Activated CD4-positive, alpha-beta memory T cell treated with anti-CD3 and anti-CD28 coated beads for 36 hours (primary cell): ENCODE measurements at regions of chr6 and their contacts with region 1.

Region 1: DNA sequence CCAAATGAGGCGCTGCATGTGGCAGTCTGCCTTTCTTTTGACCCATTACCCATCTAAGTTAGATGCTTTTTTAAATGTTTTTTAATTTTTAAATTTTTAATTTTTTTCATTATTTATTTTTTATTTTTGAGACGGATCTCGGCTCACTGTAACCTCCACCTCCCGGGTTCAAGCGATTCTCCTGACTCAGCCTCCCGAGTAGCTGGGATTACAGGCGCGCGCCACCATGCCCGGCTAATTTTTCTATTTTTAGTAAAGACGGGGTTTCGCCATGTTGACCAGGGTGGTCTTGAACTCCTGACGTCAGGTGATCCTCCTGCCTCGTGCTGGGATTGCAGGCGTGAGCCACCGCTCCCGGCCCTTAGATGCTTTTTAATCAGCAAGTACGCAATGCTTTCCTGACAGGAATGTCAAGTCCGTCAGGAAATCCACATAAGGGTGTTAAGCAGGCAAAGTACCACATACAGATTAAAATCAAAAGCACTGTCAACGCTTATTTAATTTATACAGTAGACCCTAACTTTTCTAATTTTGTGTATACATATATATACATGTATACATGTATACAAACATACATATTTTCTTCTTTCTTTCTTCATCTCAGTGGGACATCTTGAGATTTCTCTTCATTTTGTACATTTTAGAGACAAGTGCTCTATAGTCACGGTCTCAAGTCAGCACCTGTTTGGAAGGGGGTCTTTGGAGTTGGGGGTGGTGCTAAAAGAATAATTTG is 995 bp upstream of the GSTA4 start:
- DNase-seq: peak; percentile 49
- H3K4me3 Mint-ChIP-seq: peak overlapping the region; percentile 95
- H3K27ac Mint-ChIP-seq: peak overlapping the region; percentile 99
- H3K4me1 Mint-ChIP-seq: peaks cover 31% of the 10 kb centered on the region
- H3K27me3 Mint-ChIP-seq: peaks cover 5% of the 10 kb centered on the region

Region 2: GRCh38 chr6:52399511-52400312 is 596.4 kb before region 1 on chr6:
- CTCF ChIA-PET with region 1: no interaction called
- POLR2A ChIA-PET with region 1: no interaction called
- intact Hi-C with region 1: loop called (anchors 10 kb)
- DNase-seq: peak; percentile 39
- H3K4me3 Mint-ChIP-seq: no peak overlapping the region
- H3K27ac Mint-ChIP-seq: peak overlapping the region; percentile 40
- H3K4me1 Mint-ChIP-seq: peaks cover 63% of the 10 kb centered on the region
- H3K27me3 Mint-ChIP-seq: no peaks in the 10 kb centered on the region

Region 3: GRCh38 chr6:52808660-52809059 is 187.4 kb before region 1 on chr6:
- CTCF ChIA-PET with region 1: no interaction called
- POLR2A ChIA-PET with region 1: no interaction called
- intact Hi-C with region 1: no loop called
- DNase-seq: no peak
- H3K4me3 Mint-ChIP-seq: no peak overlapping the region
- H3K27ac Mint-ChIP-seq: no peak overlapping the region
- H3K4me1 Mint-ChIP-seq: no peaks in the 10 kb centered on the region
- H3K27me3 Mint-ChIP-seq: peaks cover 7% of the 10 kb centered on the region

Region 4: GRCh38 chr6:52881996-52882841 is 113.9 kb before region 1 on chr6:
- CTCF ChIA-PET with region 1: interaction called, 4 read pairs
- POLR2A ChIA-PET with region 1: no interaction called
- intact Hi-C with region 1: loop called (anchors 1 kb)
- DNase-seq: peak; percentile 79
- H3K4me3 Mint-ChIP-seq: peak overlapping the region; percentile 75
- H3K27ac Mint-ChIP-seq: no peak overlapping the region
- H3K4me1 Mint-ChIP-seq: peaks cover 6% of the 10 kb centered on the region
- H3K27me3 Mint-ChIP-seq: peaks cover 2% of the 10 kb centered on the region

Region 5: DNA sequence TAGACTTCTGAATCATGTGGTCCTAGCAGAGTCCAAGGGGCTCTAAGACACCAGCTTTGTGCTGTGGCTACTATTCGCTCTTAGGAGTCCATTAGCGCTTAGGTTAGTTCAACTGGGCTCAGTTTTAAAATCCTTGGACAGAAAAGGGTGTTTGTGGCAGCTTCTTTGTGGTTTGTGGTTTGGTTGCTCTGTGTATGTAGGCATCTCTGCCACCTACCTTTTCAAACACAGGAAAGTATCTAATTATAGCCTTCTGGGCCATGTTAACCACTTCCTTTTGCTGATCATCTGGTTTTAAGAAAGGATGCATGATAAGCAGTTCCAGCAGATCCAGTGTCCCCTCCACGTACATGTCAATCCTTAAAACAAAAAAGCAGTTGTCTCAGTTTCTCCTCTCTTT is 11.8 kb before region 1 on chr6:
- CTCF ChIA-PET with region 1: interaction called, 49 read pairs
- POLR2A ChIA-PET with region 1: interaction called, 15 read pairs
- intact Hi-C with region 1: loop called (anchors 1 kb)
- DNase-seq: peak; percentile 66
- H3K4me3 Mint-ChIP-seq: peak overlapping the region; percentile 33
- H3K27ac Mint-ChIP-seq: peak overlapping the region; percentile 78
- H3K4me1 Mint-ChIP-seq: peaks cover 70% of the 10 kb centered on the region
- H3K27me3 Mint-ChIP-seq: peaks cover 30% of the 10 kb centered on the region

Region 6: DNA sequence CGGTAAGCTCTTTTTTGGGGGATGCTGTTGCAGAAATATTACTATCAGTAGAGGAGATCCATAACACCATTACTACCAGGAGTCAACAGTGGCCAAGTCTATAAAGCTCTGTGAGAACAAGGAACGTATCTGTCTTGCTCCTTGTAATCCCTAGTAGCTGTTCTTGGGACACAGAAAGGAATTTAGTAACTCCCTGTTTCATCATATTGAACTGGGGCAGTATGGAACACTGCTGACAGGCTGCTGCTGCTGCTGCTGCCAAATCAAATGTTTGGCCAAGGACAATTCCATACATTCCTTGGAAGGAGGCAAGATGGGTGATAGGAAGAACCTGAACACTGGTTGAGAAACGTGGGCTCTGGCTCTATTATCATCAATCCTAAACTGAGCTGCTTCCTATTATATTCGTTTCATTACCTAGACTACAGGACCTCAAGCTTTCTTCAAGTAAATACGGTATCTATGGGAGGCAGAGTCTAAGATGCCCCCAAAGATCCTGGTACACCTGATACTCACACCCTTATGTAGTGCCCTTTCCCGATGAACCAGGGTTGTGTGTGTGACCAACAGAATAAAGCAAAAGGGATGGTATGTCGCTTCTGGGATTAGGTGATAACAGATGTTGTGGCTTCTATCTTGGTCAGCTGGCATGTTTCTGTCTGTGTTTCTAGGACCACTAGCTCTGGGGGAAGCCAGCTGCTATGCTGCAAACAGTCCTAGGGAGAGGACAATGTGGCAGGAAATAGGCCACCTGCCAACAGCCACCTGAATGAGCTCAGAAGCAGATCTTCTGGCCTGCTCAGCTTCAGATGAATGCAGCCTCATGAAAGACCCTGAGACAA is 313.2 kb after region 1 on chr6:
- CTCF ChIA-PET with region 1: no interaction called
- POLR2A ChIA-PET with region 1: no interaction called
- intact Hi-C with region 1: loop called (anchors 10 kb)
- DNase-seq: no peak
- H3K4me3 Mint-ChIP-seq: no peak overlapping the region
- H3K27ac Mint-ChIP-seq: peak overlapping the region; percentile 44
- H3K4me1 Mint-ChIP-seq: peaks cover 80% of the 10 kb centered on the region
- H3K27me3 Mint-ChIP-seq: no peaks in the 10 kb centered on the region

Region 7: GRCh38 chr6:53544470-53545308 is 548.6 kb after region 1 on chr6 and contains the start of gene GCLC:
- CTCF ChIA-PET with region 1: no interaction called
- POLR2A ChIA-PET with region 1: no interaction called
- intact Hi-C with region 1: loop called (anchors 10 kb)
- DNase-seq: peak; percentile 94
- H3K4me3 Mint-ChIP-seq: peak within 1 kb of the TSS; percentile 94
- H3K27ac Mint-ChIP-seq: peak within 1 kb of the TSS; percentile 86
- H3K4me1 Mint-ChIP-seq: peaks cover 62% of the 10 kb centered on the region
- H3K27me3 Mint-ChIP-seq: no peaks in the 10 kb centered on the region
- total RNA-seq, gene GCLC: 27.2 to 33.3 TPM